ENCODE measurements at regions of chr12 and their contacts with region 1.

Region 1: DNA sequence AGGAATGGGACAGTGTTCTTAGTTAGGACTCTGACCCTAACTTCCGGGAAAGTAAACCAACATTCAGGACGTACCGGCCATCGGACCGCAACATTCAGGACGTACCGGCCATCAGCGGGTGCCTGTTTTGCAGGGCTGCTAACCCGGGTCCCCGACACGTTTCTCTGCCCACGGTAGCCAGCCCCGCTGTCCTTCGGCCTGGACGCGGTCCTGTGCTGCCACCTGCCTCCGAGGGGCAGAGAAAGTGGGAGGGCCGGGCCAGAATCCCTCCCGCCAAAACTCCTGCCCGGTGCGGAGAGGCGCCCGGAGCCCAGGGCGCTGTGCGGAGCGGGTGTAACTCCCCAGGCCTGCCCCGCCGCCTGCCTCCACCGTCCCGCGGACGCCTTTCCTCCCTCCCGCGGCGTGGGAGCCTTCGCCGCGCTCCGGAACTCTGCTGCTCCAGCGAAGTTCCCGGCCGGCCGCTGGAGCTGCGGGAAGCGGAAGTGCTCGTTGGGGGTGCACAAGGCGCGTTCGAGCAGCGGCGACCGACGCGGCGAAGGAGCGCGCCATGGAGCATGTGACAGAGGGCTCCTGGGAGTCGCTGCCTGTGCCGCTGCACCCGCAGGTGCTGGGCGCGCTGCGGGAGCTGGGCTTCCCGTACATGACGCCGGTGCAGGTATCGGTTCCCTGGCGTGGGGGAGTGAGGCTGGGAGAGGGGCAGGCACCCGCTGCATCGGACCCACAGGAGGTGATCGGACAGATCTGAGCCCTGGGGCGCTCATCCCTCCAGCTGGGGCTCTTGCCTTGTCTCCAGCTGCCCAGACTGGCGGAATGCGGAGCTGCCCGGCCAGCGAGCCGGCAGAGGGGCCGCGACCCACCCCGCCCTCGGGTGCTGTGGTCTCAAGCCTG is at the start of gene DDX55:
- DNase-seq: peak; percentile 83
- H3K4me3 ChIP-seq: peak within 1 kb of the TSS; percentile 72 to 89 (median 73)
- H3K27ac ChIP-seq: peak within 1 kb of the TSS; percentile 37
- H3K4me1 ChIP-seq: peaks cover 7% of the 10 kb centered on the region
- H3K27me3 ChIP-seq: no peaks in the 10 kb centered on the region
- CTCF ChIP-seq: peak; percentile 44 to 45
- POLR2A ChIP-seq: peak; percentile 87
- total RNA-seq, gene DDX55: 25.9 and 29.5 TPM in 2 replicates

Region 2: DNA sequence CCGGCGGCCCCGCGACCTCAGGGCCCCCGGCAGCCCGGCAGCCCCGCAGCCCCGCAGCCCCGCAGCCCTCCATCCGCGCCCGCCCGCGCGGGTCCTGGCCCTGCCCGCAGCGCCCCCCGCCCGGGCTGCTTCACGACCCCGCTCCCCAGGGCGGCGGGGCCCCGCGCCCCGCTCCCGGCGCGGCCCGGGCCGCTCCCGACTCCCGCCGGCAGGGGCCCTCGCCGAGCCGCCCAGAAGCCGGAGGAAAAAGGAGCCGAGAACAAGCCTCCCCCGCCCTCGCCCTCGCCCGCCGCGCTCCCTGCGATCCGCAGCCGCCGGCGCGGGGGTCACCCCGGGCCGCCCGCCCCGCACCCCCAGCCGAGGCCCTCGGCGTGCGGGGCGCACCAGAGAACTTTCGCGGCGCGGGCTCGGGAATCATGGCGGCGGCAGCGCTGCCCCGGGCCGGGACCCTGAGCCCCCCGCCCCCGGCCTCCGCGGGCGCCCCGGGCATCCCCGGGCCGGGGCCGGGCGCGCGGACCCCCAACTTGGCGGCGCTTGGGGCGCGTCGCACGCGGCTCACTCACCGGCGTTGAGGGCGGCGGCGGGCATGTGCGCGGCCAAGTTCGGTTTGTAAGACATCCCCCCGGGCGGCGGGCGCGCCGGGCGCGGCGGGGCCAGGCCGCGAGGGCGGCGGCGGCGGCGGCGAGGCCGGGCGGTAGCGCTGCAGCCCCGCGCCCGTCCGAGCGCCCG is 330.7 kb before region 1 on chr12:
- CTCF ChIA-PET with region 1: interaction called, 3 read pairs
- POLR2A ChIA-PET with region 1: no interaction called
- dilution Hi-C with region 1: loop called (anchors 25 kb)
- intact Hi-C with region 1: loop called (anchors 1 kb)
- DNase-seq: no peak
- H3K4me3 ChIP-seq: peak overlapping the region; percentile 32 to 90 (median 87)
- H3K27ac ChIP-seq: peak overlapping the region; percentile 83
- H3K4me1 ChIP-seq: peaks cover 26% of the 10 kb centered on the region
- H3K27me3 ChIP-seq: no peaks in the 10 kb centered on the region
- CTCF ChIP-seq: peak; percentile 42 to 57
- POLR2A ChIP-seq: no peak

Region 3: DNA sequence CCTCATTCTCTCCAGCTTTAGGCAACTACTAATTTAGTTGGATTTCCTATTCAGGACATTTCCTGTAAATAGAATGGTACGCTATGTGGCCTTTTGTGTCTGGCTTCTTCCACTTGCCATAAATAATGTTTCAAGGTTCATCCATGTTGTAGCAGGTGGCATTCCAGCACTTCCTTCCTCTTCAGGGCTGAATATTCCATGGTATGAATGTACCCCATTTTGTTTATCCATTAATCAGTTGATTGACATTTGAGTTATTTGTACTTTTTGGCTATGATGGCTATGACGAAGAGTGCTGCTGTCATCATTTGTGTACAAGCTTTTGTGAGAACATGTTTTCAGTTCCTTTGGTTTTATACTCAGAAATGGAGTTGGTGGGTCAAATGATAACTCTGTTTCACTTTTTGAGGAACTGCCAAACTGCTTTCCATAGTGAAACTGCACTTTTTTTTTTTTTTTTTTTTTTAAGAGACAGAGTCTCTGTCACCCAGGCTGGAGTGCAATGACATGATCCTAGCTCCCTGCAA is 323.7 kb before region 1 on chr12:
- CTCF ChIA-PET with region 1: no interaction called
- POLR2A ChIA-PET with region 1: no interaction called
- dilution Hi-C with region 1: loop called (anchors 25 kb)
- intact Hi-C with region 1: no loop called
- DNase-seq: peak; percentile 87
- H3K4me3 ChIP-seq: peak overlapping the region in 1 of 3 experiments; percentile 28
- H3K27ac ChIP-seq: peak overlapping the region; percentile 68
- H3K4me1 ChIP-seq: peaks cover 11% of the 10 kb centered on the region
- H3K27me3 ChIP-seq: no peaks in the 10 kb centered on the region
- CTCF ChIP-seq: no peak
- POLR2A ChIP-seq: no peak

Region 4: DNA sequence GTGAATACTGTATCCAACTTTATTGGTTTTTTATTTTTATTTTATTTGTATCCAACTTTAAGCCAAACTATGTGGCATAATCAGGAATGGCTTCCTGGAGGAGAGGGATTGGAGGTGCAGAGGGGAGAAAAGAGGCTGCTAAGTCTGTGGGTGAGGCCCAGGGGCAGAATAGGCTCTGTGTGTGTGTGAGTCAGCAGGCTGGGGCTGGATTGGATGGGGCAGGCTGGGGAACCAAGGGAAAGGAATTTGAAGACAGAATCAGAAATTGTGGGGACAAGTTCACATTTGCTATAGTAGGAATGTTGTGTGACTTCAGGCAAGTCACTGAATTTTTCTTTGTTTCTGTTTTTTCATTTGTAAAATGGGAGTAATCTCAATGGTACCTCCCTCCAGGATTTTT is 55.6 kb before region 1 on chr12:
- CTCF ChIA-PET with region 1: no interaction called
- POLR2A ChIA-PET with region 1: no interaction called
- dilution Hi-C with region 1: no loop called
- intact Hi-C with region 1: no loop called
- DNase-seq: no peak
- H3K4me3 ChIP-seq: no peak overlapping the region
- H3K27ac ChIP-seq: no peak overlapping the region
- H3K4me1 ChIP-seq: no peaks in the 10 kb centered on the region
- H3K27me3 ChIP-seq: peaks cover 5 to 7% of the 10 kb centered on the region in 2 experiments
- CTCF ChIP-seq: no peak
- POLR2A ChIP-seq: no peak